ENCODE measurements at regions of chr14 and their contacts with region 1.

Region 1: DNA sequence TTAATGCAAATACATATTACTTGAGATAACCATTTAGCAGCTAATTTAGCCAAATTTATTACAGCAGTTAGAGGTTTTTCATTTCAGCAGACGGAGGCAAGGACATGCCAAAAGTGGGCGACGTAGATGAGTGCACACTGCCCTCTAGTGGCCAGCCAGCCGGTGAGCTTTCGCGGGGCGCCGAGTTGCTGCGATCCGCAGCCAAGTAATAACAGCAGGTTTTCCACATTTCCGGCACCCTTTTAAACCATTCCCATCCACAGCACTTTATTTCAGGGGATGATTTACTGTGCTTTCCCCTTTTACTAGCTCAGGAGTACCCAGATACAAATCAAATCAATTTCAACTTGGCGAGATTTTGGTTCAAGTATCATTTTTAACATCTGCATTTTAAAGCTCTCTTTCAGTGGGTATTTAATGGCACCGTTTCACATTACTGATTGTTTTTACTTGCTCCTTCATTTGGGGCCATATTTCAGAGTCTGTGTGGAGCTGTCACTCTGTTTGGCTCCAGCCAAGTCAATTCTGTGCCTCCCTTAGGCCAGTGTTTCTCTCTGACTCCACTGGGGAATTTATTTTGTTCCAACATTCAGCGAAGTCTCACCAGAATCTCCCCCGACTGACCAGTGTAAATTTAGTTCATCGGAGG is 158.0 kb downstream of the EGLN3 start:
- DNase-seq: peak; percentile 80 to 92 (median 91)
- ATAC-seq: peak; percentile 88
- H3K4me3 ChIP-seq: peak overlapping the region; percentile 31
- H3K27ac ChIP-seq: no peak overlapping the region
- H3K4me1 ChIP-seq: no peaks in the 10 kb centered on the region
- H3K27me3 ChIP-seq: no peaks in the 10 kb centered on the region

Region 2: GRCh38 chr14:32576088-32576795 is 1216.6 kb before region 1 on chr14:
- intact Hi-C with region 1: loop called (anchors 5 to 10 kb)
- DNase-seq: peak in 1 of 3 donors; percentile 53
- ATAC-seq: peak; percentile 83 to 86
- H3K4me3 ChIP-seq: peak overlapping the region; percentile 26
- H3K27ac ChIP-seq: no peak overlapping the region
- H3K4me1 ChIP-seq: no peaks in the 10 kb centered on the region
- H3K27me3 ChIP-seq: no peaks in the 10 kb centered on the region

Region 3: DNA sequence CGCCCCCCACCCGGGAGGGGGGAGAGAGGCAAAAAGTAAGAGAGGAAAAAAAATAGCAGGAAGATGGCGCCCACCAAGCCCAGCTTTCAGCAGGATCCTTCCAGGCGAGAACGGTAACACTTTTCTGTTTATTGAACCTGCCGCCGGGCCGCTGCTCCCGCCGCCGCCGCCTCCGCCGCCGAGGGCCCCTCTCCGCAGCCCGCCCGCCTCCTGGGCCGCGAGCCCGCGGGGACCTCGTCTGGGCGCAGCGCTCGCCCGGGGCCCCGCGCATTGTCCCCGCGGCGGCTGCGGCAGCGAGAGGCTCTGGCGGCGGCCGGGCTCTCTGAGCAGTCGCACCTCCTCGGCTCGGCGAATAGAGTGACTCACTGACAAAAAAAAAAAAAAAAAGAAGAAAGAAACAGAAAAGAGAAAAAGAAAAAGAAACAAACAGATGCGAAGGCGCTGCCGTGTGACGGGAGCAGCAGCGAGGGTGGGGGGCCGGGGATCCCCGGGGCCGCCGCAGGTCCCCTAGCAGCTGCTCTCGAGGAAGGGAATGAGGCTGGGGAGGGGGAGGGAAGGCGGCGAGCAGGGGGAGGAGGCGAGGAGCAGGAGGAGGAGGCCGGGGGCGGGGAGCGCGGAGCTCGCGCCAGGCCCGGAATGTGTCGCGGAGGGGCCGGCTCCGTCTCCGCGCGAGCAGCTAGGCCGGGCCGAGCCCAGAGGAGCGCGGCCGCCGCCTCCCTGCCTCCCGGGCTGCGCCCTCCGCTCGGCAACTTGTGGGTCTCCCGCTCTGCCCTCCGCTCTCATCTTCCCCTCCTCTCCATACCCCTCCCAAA is 853.4 kb before region 1 on chr14:
- intact Hi-C with region 1: loop called in 1 of 4 experiments (anchors 10 kb)
- DNase-seq: peak; percentile 83 to 93 (median 93)
- ATAC-seq: peak; percentile 96 to 97
- H3K4me3 ChIP-seq: peak overlapping the region; percentile 97
- H3K27ac ChIP-seq: peak overlapping the region; percentile 57
- H3K4me1 ChIP-seq: no peaks in the 10 kb centered on the region
- H3K27me3 ChIP-seq: no peaks in the 10 kb centered on the region

Region 4: DNA sequence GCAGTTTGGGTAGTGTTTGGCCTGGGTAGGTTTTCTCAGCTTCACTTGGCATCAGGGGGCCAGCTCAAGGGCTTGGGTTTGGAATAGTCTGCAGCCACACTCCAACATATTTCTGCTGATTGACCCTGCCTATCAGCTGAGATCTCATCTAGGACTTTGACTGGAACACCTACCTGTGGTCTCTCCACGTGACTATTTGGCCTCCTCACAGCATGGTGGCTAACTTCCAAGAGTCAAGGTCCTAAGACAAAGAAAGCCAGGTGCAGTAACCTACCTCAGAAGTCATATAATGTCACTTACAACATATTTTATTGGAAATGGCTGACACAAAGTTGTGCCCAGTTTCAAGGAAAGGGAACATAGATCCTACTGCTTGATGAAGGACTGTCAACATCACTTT is 322.9 kb before region 1 on chr14:
- intact Hi-C with region 1: loop called in 1 of 4 experiments (anchors 5 kb)
- DNase-seq: no peak
- ATAC-seq: no peak
- H3K4me3 ChIP-seq: no peak overlapping the region
- H3K27ac ChIP-seq: no peak overlapping the region
- H3K4me1 ChIP-seq: no peaks in the 10 kb centered on the region
- H3K27me3 ChIP-seq: no peaks in the 10 kb centered on the region

Region 5: GRCh38 chr14:33602396-33602795 is 190.4 kb before region 1 on chr14:
- intact Hi-C with region 1: no loop called
- DNase-seq: no peak
- ATAC-seq: no peak
- H3K4me3 ChIP-seq: no peak overlapping the region
- H3K27ac ChIP-seq: no peak overlapping the region
- H3K4me1 ChIP-seq: no peaks in the 10 kb centered on the region
- H3K27me3 ChIP-seq: no peaks in the 10 kb centered on the region

Region 6: GRCh38 chr14:33686218-33686617 is 106.6 kb before region 1 on chr14:
- intact Hi-C with region 1: loop called in 1 of 4 experiments (anchors 5 kb)
- DNase-seq: no peak
- ATAC-seq: no peak
- H3K4me3 ChIP-seq: no peak overlapping the region
- H3K27ac ChIP-seq: no peak overlapping the region
- H3K4me1 ChIP-seq: no peaks in the 10 kb centered on the region
- H3K27me3 ChIP-seq: no peaks in the 10 kb centered on the region

Region 7: DNA sequence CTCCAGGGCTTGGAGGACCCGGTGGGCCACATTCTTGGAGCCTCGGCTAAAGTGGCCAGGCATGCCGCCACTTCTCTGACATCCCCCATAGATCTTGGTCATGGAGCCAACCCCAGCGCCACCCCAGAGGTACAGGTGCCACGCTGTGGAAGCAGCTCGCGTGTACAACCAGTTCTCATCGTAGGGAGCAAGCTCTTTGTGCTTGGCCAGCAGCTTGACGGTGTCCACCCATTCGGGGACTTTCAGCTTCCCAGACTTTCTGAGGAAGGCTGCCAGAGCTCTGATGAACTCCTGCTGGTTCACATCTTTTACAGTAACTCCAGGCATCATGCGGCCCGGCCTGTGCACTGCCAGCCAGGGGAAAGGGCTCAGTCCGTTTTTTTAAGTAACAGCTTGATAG is 776.0 kb after region 1 on chr14:
- intact Hi-C with region 1: no loop called
- DNase-seq: peak in 1 of 3 donors; percentile 20
- ATAC-seq: no peak
- H3K4me3 ChIP-seq: no peak overlapping the region
- H3K27ac ChIP-seq: no peak overlapping the region
- H3K4me1 ChIP-seq: no peaks in the 10 kb centered on the region
- H3K27me3 ChIP-seq: no peaks in the 10 kb centered on the region

Measured in right cardiac atrium (tissue), 5 donors.